Vagina (tissue), 2 donors: ENCODE measurements at regions of chr19 and their contacts with region 1.

Region 1: DNA sequence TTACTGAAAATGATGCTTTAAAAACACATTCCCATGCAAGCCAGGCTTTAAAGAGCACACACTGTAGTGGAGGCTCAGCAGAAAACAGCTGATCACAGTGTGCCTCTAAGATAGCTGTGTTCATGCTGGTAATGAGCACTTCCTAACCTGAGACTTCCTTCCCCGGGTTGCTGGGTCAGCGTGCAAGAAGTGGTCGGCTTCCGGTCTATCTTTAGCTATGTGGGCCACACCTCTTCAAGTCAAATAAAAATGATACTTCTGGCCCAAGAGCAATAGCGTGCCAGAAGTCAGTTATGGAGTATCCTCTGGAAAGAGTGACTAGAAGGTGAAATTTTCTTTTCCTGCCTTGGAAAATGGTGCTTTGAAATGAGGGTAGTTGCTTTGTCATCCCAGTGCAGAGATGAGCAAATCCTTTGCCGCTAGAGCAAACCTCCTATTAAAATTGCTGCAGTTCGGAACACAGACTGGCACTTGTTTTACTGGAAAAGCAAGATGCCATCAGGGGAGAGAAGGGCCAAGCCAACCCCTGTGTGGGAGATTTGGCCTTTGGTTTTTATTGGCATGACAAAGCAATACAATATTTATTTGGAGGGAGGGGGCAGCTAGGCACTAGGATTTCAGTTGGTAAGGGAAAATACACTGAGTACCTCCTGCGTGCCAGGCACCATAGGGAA is 64.2 kb downstream of the ARHGAP35 start:
- DNase-seq: no peak
- H3K4me3 ChIP-seq: peak overlapping the region in 1 of 2 donors; percentile 1
- H3K27ac ChIP-seq: peak overlapping the region; percentile 56
- H3K4me1 ChIP-seq: peaks cover 56% of the 10 kb centered on the region
- H3K27me3 ChIP-seq: no peaks in the 10 kb centered on the region
- CTCF ChIP-seq: no peak
- POLR2A ChIP-seq: no peak

Region 2: DNA sequence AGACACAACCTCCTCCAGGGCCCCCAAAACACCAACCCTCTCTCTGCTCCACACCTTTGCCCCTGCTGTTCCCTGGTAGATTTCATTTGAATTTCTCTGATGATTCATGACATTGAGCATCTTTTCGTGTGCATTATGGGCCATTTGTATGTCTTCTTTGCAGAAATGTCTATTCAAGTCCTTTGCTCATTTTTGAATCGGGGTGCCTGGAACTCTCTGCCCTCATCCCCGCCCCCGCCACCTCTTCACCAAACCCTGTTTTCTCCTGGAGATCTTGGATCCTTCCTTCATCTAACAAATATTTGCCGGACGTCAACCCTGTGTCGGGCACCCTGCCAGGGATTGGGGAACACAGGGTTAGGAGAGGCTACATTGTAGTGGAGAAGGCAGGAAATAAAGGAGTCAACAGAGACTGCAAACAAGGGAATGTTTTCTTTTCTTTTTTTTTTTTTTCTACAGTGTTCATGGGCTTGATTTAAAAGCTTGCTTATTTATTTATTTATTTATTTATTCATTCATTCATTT is 111.1 kb before region 1 on chr19:
- intact Hi-C with region 1: no loop called
- DNase-seq: no peak
- H3K4me3 ChIP-seq: no peak overlapping the region
- H3K27ac ChIP-seq: peak overlapping the region; percentile 48
- H3K4me1 ChIP-seq: peaks cover 10% of the 10 kb centered on the region
- H3K27me3 ChIP-seq: no peaks in the 10 kb centered on the region
- CTCF ChIP-seq: no peak
- POLR2A ChIP-seq: no peak

Region 3: GRCh38 chr19:46975925-46976782 is 51.1 kb after region 1 on chr19:
- intact Hi-C with region 1: loop called (anchors 10 kb)
- DNase-seq: peak in 1 of 2 donors; percentile 97
- H3K4me3 ChIP-seq: no peak overlapping the region
- H3K27ac ChIP-seq: peak overlapping the region; percentile 81
- H3K4me1 ChIP-seq: peaks cover 97% of the 10 kb centered on the region
- H3K27me3 ChIP-seq: no peaks in the 10 kb centered on the region
- CTCF ChIP-seq: no peak
- POLR2A ChIP-seq: no peak